ENCODE measurements at regions of chr4 and their contacts with region 1.

Region 1: GRCh38 chr4:20408611-20409010 is 156.9 kb downstream of the SLIT2 start:
- DNase-seq: no peak
- ATAC-seq: peak in 3 of 8 donors; percentile 46 to 75 (median 65)
- H3K4me3 ChIP-seq: no peak overlapping the region
- H3K27ac ChIP-seq: no peak overlapping the region
- H3K4me1 ChIP-seq: peaks cover 0 to 7% (median 0%) of the 10 kb centered on the region in 9 donors
- H3K27me3 ChIP-seq: no peaks in the 10 kb centered on the region
- CTCF ChIP-seq: no peak

Region 2: DNA sequence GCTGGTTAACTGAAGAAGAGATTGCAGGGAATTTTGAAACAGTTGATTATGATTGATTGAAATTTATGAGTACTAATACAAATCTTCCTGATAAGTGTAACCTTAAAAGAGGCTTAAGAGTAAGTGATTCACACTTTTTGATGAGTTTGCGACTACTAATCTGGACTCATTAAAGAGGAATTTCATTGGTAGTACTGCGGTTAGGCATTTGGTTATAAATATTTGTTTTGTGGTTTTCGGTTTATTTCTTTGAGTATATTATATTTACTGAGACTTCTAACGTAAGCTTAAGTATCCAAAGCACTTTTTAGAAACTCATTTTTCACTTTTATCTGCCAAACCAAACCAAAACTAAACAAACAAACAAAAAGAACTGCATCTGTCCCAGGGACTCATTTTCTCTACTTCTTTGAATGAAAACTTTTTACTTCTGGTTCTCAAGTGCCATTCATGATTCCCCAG is 136.2 kb before region 1 on chr4:
- intact Hi-C with region 1: no loop called
- DNase-seq: no peak
- ATAC-seq: no peak
- H3K4me3 ChIP-seq: no peak overlapping the region
- H3K27ac ChIP-seq: no peak overlapping the region
- H3K4me1 ChIP-seq: no peaks in the 10 kb centered on the region
- H3K27me3 ChIP-seq: no peaks in the 10 kb centered on the region
- CTCF ChIP-seq: no peak

Region 3: DNA sequence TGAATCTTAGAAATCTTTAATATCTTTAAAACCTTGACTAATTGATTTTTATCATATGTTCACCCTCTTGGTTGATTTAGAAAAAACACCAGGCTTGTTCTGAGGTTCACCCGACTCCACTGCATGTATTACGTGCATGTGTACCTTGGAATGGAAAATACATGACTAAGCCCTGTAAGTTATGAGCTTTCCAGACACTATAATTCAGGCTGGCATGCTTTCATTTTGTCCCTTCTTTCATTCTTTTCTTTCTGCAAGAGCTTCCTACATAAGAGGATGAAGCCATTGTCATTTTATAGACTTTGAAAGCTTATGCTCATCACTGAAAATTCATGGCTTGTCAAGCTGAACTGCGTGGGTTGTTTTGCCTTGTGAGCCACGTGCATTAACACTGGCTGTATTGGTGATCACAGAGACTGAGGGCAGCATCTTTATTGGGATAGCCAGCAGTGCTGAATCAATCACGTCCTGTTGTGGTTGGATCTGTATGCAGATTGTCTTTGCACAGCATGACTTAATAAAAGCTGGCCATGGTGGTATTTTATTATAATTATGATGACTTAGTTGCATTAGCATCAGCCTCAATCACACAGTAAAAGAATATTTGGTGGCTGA is 15.0 kb before region 1 on chr4:
- intact Hi-C with region 1: loop called in 1 of 10 experiments (anchors 2 kb)
- DNase-seq: no peak
- ATAC-seq: no peak
- H3K4me3 ChIP-seq: no peak overlapping the region
- H3K27ac ChIP-seq: no peak overlapping the region
- H3K4me1 ChIP-seq: no peaks in the 10 kb centered on the region
- H3K27me3 ChIP-seq: no peaks in the 10 kb centered on the region
- CTCF ChIP-seq: no peak

Region 4: DNA sequence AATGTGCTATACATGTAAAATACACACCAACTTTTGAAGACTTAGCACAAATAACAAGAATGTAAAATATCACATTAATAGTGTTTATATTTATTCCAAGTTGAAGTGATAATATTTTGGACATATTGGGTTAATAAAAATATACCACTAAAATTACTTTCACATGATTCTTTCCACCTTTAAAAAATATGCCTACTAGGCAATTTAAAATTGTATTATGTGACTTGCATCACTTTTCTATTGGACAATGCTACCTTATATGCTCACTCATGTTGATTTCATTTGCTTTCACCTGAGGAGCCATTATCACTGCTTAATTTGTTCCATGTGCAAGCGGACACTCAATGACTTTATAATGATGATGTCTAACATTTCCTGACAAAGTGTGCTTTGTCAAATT is 288.2 kb after region 1 on chr4:
- intact Hi-C with region 1: no loop called
- DNase-seq: no peak
- ATAC-seq: no peak
- H3K4me3 ChIP-seq: no peak overlapping the region
- H3K27ac ChIP-seq: no peak overlapping the region
- H3K4me1 ChIP-seq: peaks cover 0 to 24% (median 16%) of the 10 kb centered on the region in 9 donors
- H3K27me3 ChIP-seq: peaks cover 0 to 4% (median 0%) of the 10 kb centered on the region in 7 donors
- CTCF ChIP-seq: no peak

Measured in heart right ventricle (tissue), 16 donors.